Activated T-helper 2 cell treated with anti-CD3 and anti-CD28 coated beads, Interferon-gamma antibody, Interleukin-2, Interleukin-4, amounts not matched to agents 10 μg/mL and 5 μg/mL and 100 μg/mL, durations not matched to agents 14 hours and 24 hours and 36 hours (primary cell): ENCODE measurements at regions of chr17 and their contacts with region 1.

Region 1: DNA sequence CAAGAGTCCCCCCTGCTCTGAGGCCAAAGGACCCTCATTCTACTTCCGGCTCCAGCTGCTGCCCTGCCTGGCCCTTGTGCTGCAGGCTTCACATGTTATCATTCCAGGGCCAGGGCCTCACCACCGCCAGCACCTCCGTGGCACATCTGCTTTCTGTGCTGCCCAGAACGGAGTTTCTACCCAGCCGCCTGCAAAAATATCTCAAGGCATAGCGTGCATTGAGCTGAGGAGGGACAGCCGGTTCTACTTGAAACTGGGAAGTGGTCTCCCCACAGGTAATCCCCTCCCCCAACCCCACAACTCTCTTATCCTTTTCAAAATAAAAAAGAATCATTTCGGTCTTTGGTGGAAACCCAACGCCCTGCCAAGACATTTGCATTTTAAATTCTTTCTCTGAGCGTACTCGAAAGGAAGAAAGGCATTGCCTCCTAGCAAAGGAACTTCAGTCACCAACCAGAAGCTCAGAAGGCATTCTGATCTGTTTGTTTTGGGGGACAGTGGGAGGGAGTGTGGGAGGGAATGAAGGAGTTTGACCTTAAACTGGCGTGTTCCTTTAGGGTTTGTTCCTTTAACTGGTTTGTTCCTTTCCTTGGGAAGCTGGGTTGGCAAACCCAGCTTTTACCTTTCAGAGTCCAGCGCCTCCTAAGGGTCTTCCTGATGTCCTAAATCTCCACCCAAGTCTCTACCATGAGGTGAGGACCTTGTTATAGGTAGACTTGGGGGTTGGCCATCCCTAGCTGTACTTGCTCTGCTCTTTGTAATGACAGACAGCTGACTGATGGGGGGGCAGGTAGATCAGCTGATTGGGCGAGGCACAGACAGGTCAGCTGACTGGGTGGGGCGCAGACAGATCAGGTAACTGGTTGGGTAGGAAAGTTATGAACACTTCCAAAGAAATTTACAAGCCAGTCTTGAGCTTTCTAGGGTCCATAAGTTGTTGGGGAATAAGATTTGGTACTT is 33.4 kb upstream of the PIK3R6 start:
- DNase-seq: no peak
- H3K4me3 Mint-ChIP-seq: peak overlapping the region; percentile 27
- H3K27ac Mint-ChIP-seq: peak overlapping the region; percentile 91
- H3K4me1 Mint-ChIP-seq: peaks cover 64% of the 10 kb centered on the region
- H3K27me3 Mint-ChIP-seq: no peaks in the 10 kb centered on the region

Region 2: GRCh38 chr17:8857919-8858318 is 43.0 kb before region 1 on chr17:
- intact Hi-C with region 1: loop called (anchors 2 kb)
- DNase-seq: peak; percentile 55
- H3K4me3 Mint-ChIP-seq: peak overlapping the region; percentile 75
- H3K27ac Mint-ChIP-seq: peak overlapping the region; percentile 95
- H3K4me1 Mint-ChIP-seq: peaks cover 58% of the 10 kb centered on the region
- H3K27me3 Mint-ChIP-seq: no peaks in the 10 kb centered on the region

Region 3: GRCh38 chr17:8922451-8922850 is 21.5 kb after region 1 on chr17:
- intact Hi-C with region 1: loop called (anchors 2 kb)
- DNase-seq: no peak
- H3K4me3 Mint-ChIP-seq: peak overlapping the region; percentile 34
- H3K27ac Mint-ChIP-seq: peak overlapping the region; percentile 95
- H3K4me1 Mint-ChIP-seq: peaks cover 26% of the 10 kb centered on the region
- H3K27me3 Mint-ChIP-seq: no peaks in the 10 kb centered on the region

Region 4: GRCh38 chr17:8941520-8941919 is 40.6 kb after region 1 on chr17:
- intact Hi-C with region 1: loop called (anchors 2 kb)
- DNase-seq: peak; percentile 57
- H3K4me3 Mint-ChIP-seq: peak overlapping the region; percentile 59
- H3K27ac Mint-ChIP-seq: peak overlapping the region; percentile 95
- H3K4me1 Mint-ChIP-seq: peaks cover 60% of the 10 kb centered on the region
- H3K27me3 Mint-ChIP-seq: no peaks in the 10 kb centered on the region

Region 5: DNA sequence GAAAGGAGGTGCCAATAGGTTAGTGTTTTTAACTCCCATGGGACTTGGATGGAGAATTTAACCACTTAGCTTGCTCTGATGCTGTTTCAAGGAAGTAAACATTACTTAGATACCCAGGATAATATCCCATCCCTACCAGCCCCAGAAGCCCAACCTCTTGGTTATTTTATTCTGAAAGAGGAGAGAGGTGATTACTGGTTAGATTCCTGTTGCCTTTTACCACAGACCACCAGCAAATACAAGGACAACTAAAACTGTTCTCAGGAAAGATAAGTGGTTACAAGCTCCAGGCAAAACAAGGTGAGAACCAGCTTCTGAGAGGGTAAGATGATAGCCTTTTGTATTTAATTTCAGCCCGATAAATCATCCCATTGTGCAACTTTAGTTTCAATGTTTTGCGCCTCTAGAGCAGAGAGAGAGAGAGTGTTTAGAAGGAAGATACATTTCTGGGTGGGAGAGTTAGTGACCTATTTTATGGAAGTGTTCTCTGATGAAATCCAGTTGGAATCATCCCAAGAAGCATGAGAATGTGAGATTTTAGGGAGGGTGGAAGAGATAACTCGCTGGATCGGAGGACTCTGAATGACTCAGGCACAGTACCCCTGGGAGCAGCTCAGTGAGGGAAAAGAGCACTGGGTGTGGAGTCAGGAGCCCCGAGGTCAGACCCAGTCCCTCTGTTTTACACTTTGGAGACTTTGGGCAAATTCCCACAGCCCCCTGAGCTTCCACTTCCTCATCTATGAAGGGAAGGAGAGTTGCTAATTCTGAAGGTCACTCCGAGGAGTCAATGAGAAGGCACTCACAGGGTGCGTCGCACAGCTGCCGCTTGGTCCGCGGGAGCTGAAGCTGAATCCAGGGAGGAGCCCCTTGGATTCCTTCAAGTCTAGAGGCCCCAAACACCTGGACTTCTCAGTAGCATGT is 936.9 kb after region 1 on chr17:
- intact Hi-C with region 1: no loop called
- DNase-seq: no peak
- H3K4me3 Mint-ChIP-seq: no peak overlapping the region
- H3K27ac Mint-ChIP-seq: no peak overlapping the region
- H3K4me1 Mint-ChIP-seq: no peaks in the 10 kb centered on the region
- H3K27me3 Mint-ChIP-seq: no peaks in the 10 kb centered on the region